Heart left ventricle (tissue), 16 donors: ENCODE measurements at regions of chr2 and their contacts with region 1.

Region 1: DNA sequence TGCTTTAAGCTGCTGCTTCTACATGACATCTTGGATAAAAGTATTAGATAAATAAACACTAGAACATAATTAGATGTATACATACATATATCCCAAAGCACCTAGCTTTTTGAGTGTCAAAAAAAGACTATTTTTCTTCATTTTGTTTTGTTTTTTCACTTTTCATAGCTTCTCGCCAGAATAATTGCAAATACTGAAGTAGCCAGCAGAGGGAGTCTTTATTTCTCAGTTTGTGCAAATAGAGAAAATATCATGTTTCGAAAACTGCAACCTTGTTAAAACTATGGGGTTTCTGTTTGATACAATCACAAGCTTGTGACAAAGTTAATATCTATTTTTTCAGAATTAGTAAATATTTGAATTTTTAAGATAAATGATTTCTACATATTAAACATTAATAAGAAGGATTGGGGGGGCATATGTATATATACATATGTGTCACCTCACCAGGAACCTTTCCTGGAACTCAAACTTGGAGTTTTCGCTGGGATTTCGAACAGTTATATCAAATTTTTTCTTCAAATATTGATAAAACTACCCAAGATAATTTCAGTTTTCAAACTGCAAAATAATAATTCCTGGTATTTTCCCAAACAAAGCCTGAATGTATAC is 61.0 kb downstream of the GRB14 start:
- DNase-seq: no peak
- ATAC-seq: no peak
- H3K4me3 ChIP-seq: peak overlapping the region in 9 of 12 donors; percentile 4 to 43 (median 28)
- H3K27ac ChIP-seq: peak overlapping the region in 2 of 12 donors; percentile 42 to 49
- H3K4me1 ChIP-seq: peaks cover 0 to 23% (median 8%) of the 10 kb centered on the region in 12 donors
- H3K27me3 ChIP-seq: no peaks in the 10 kb centered on the region
- CTCF ChIP-seq: peak; percentile 61 to 85 (median 72)
- POLR2A ChIP-seq: no peak

Region 2: DNA sequence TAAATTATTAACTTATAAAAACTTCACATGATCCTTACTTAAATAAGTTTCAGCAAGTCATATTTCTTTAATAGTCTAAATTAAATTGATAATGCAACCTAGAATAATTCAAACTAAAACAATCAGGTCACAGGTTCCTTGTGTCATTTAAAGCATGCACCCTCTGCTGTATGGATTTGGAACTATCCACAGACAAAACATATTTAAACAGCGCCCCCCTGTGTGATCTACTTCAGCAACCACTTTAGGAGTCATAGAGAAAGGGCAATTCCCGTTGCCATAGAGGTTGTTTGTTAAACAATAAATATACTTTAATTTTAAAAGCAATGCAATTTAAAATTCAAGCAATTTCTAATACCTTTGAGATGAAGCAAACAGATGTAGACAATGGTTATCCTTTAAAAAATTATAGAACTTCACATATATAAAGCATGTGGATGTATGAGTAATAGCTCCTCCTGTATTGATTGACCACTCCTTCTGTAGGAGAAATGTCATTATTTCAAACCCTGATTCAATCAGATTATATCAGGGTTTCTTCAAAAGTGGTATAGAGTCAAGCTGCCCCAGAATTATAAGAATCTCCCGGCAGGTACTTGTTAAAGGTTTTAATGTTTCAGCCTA is 39.8 kb after region 1 on chr2:
- intact Hi-C with region 1: loop called in 8 of 10 experiments (anchors 1 to 5 kb)
- DNase-seq: peak in 2 of 5 donors; percentile 20 to 28
- ATAC-seq: peak in 3 of 4 donors; percentile 78 to 93 (median 81)
- H3K4me3 ChIP-seq: no peak overlapping the region
- H3K27ac ChIP-seq: no peak overlapping the region
- H3K4me1 ChIP-seq: peaks cover 0 to 7% (median 0%) of the 10 kb centered on the region in 12 donors
- H3K27me3 ChIP-seq: no peaks in the 10 kb centered on the region
- CTCF ChIP-seq: peak; percentile 56 to 80 (median 71)
- POLR2A ChIP-seq: no peak

Region 3: DNA sequence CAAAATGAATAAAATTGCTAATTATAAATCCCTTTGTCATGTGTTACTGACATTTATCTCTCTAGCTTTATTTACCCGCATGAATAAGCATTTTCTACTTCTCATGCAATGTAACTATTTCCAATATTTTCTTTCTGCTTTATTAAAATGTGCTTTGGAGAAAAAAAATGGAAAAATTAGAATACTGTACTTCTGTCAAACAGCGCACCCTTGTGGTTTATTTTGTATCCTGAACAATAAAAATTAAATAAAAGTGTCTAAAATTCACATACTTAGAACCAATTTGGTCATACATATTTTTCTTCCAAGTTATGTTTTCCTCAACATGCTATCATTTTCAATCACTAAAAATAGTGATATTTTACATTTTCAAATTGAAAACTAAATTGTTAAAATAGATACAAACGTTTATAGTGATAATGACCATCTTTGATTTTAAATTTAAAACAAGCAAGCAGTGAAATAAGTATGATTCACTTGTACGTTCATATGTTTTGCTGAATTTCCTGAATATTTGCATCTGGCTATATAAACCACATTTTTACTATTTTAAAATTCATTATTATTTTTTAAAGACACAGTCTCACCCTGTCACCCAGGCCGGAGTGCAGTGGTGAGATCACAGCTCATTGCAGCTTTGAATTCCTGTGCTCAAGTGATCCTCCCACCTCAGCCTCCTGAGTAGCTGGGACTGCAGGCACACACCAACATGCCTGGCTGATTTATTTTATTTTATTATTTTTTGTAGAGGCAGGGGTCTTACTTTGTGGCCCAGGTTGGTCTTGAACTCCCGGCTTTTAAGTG is 156.9 kb after region 1 on chr2:
- intact Hi-C with region 1: loop called in 9 of 10 experiments (anchors 2 to 10 kb)
- DNase-seq: no peak
- ATAC-seq: no peak
- H3K4me3 ChIP-seq: no peak overlapping the region
- H3K27ac ChIP-seq: no peak overlapping the region
- H3K4me1 ChIP-seq: peaks cover 0 to 20% (median 3%) of the 10 kb centered on the region in 12 donors
- H3K27me3 ChIP-seq: no peaks in the 10 kb centered on the region
- CTCF ChIP-seq: peak; percentile 43 to 72 (median 62)
- POLR2A ChIP-seq: no peak

Region 4: DNA sequence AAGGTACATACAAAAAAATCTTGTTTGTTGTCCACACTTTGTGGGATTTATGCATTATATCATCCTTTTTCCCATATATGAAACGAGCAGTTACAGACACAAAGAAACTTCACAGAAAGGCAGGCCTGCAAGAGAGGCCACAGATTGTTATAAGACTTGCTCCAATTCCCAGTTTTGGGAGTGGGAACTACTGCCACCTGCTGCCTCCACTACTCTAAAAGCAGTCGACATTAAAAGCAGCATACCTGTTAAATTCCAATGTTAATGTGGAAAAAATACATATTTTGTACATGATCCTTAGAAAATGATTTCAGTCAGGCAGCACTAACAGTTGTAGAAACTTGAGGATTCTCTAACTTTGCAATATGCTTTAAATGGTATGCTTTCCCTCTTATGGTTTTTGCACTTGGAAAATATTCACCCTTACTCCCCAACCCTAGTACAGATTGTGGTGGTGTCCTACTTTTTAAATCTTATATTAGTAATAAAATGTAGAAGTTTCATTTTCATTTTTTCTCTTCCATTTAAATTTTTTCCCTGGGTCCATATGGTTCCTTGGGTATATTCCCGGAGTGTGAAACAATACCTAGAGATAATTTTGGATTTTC is 357.1 kb after region 1 on chr2:
- intact Hi-C with region 1: loop called in 2 of 10 experiments (anchors 5 to 10 kb)
- DNase-seq: peak; percentile 34 to 52 (median 37)
- ATAC-seq: peak in 3 of 4 donors; percentile 62 to 70 (median 66)
- H3K4me3 ChIP-seq: no peak overlapping the region
- H3K27ac ChIP-seq: no peak overlapping the region
- H3K4me1 ChIP-seq: peaks cover 0 to 20% (median 5%) of the 10 kb centered on the region in 12 donors
- H3K27me3 ChIP-seq: no peaks in the 10 kb centered on the region
- CTCF ChIP-seq: peak; percentile 39 to 78 (median 64)
- POLR2A ChIP-seq: no peak